HepG2 (cell line): ENCODE measurements at regions of chr17 and their contacts with region 1.

Region 1: GRCh38 chr17:4771519-4772234 is at the start of gene TM4SF5:
- DNase-seq: peak; percentile 95
- ATAC-seq: peak; percentile 96
- H3K4me3 ChIP-seq: peak within 1 kb of the TSS; percentile 65 to 83 (median 75)
- H3K27ac ChIP-seq: peak within 1 kb of the TSS; percentile 76
- H3K4me1 ChIP-seq: peaks cover 78% of the 10 kb centered on the region
- H3K27me3 ChIP-seq: no peaks in the 10 kb centered on the region; a peak in 1 of 5 replicates
- CTCF ChIP-seq: peak; percentile 41
- EP300 ChIP-seq: peak in 1 of 2 experiments; percentile 84; a peak in 2 of 4 replicates
- POLR2A ChIP-seq: peak; percentile 53 to 96
- RAD21 ChIP-seq: no peak
- total RNA-seq, gene TM4SF5: 15.6 and 30.1 TPM in 2 replicates

Region 2: DNA sequence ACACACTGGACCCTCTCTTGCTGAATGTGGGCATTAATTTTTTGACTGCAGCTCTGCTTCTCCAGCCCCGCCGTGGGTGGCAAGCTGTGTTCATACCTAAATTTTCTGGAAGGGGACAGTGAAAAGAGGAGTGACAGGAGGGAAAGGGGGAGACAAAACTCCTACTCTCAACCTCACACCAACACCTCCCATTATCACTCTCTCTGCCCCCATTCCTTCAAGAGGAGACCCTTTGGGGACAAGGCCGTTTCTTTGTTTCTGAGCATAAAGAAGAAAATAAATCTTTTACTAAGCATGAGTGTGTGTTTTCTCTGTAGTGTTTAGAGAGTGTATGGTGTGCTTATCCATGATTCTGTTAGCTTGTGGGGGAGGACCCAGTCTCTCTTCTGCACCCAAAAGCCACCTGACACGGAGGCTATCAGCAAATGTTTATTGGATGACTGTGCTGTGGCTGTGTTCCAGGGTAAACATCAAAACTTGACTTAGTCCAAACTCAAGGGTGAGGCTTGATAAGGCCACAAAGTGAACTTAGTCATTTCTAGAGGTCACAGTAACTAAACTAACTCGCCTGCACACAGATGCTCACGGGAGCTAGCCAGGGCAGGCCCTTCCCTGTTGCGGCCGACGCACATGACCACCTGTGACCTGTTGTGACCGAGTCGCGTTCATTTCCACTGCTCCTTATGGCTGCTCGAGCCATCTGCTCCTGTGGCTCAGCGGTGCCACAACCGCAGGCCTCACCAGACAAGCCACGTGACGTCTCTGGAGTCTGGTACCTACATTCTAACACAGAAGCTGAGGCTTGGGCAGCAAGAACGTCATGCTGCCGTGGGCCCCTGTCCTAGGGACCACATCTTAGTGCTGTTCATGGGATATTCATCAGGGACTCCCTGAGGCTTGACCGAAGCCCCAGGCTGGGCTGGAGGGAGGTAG is 50.2 kb before region 1 on chr17:
- CTCF ChIA-PET with region 1: no interaction called
- POLR2A ChIA-PET with region 1: interaction called, 13 read pairs
- in situ Hi-C with region 1: no loop called
- intact Hi-C with region 1: no loop called
- DNase-seq: peak; percentile 95
- ATAC-seq: peak; percentile 90
- H3K4me3 ChIP-seq: peak overlapping the region in 1 of 3 experiments; percentile 58; a peak in 3 of 6 replicates
- H3K27ac ChIP-seq: peak overlapping the region; percentile 68
- H3K4me1 ChIP-seq: peaks cover 35% of the 10 kb centered on the region
- H3K27me3 ChIP-seq: no peaks in the 10 kb centered on the region
- CTCF ChIP-seq: no peak
- EP300 ChIP-seq: peak in 1 of 2 experiments; percentile 85; a peak in 2 of 4 replicates
- POLR2A ChIP-seq: peak; percentile 50 to 69; a peak in 3 of 4 replicates
- RAD21 ChIP-seq: 0 out of 2 replicates have a peak, but pooled peaks have one; percentile 12

Region 3: GRCh38 chr17:4759776-4760236 is 11.9 kb before region 1 on chr17:
- CTCF ChIA-PET with region 1: no interaction called
- POLR2A ChIA-PET with region 1: interaction called, 18 read pairs
- in situ Hi-C with region 1: no loop called
- intact Hi-C with region 1: no loop called
- DNase-seq: peak; percentile 100
- ATAC-seq: peak; percentile 98
- H3K4me3 ChIP-seq: no peak overlapping the region
- H3K27ac ChIP-seq: peak overlapping the region; percentile 95
- H3K4me1 ChIP-seq: peaks cover 66% of the 10 kb centered on the region
- H3K27me3 ChIP-seq: no peaks in the 10 kb centered on the region
- CTCF ChIP-seq: no peak
- EP300 ChIP-seq: peak; percentile 91 to 93
- POLR2A ChIP-seq: no peak
- RAD21 ChIP-seq: no peak; the same call in 1 of the 2 replicates

Region 4: DNA sequence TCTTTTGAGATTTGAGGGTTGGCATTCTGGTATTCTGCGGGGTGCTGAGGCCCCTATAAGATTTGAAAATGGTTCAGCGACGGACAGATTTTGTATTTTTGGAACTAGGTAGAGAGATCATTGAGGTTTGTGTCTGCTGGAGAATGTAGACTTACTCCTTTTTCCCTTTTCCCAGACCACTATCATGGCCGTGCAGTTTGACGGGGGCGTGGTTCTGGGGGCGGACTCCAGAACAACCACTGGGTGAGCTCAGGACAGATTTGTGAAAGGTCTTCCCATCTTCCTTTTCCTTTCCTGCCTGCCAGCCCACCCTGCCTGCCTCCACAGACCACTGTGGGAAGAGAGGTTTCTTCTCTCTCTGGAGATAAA is 24.9 kb after region 1 on chr17:
- CTCF ChIA-PET with region 1: no interaction called
- POLR2A ChIA-PET with region 1: interaction called, 317 read pairs
- in situ Hi-C with region 1: no loop called
- intact Hi-C with region 1: no loop called
- DNase-seq: peak; percentile 33
- ATAC-seq: peak; percentile 86
- H3K4me3 ChIP-seq: peak overlapping the region; percentile 85 to 97 (median 86)
- H3K27ac ChIP-seq: peak overlapping the region; percentile 79
- H3K4me1 ChIP-seq: peaks cover 17% of the 10 kb centered on the region
- H3K27me3 ChIP-seq: no peaks in the 10 kb centered on the region; a peak in 1 of 5 replicates
- CTCF ChIP-seq: no peak
- EP300 ChIP-seq: no peak
- POLR2A ChIP-seq: 0 out of 4 replicates have a peak, but pooled peaks of 1 of the 2 experiments have one; percentile 5
- RAD21 ChIP-seq: no peak